K562 (cell line): ENCODE measurements at regions of chr11 and their contacts with region 1.

Region 1: GRCh38 chr11:76152086-76152681 is 54.1 kb downstream of the WNT11 start:
- DNase-seq: peak; percentile 88 to 92 (median 89)
- ATAC-seq: peak; percentile 97
- H3K4me3 ChIP-seq: peak overlapping the region; percentile 35
- H3K27ac ChIP-seq: no peak overlapping the region; the same call in 2 of the 3 replicates
- H3K4me1 ChIP-seq: peaks cover 12 to 20% of the 10 kb centered on the region in 2 experiments
- H3K27me3 ChIP-seq: peaks cover 2 to 9% of the 10 kb centered on the region in 2 experiments; a peak in 3 of 5 replicates
- CTCF ChIP-seq: peak; percentile 95 to 98 (median 95)
- EP300 ChIP-seq: no peak
- POLR2A ChIP-seq: no peak
- RAD21 ChIP-seq: peak; percentile 94 to 97

Region 2: GRCh38 chr11:75721855-75722668 is 430.1 kb before region 1 on chr11:
- CTCF ChIA-PET with region 1: no interaction called
- POLR2A ChIA-PET with region 1: no interaction called
- in situ Hi-C with region 1: no loop called
- intact Hi-C with region 1: loop called (anchors 10 kb)
- DNase-seq: no peak
- ATAC-seq: no peak
- H3K4me3 ChIP-seq: no peak overlapping the region
- H3K27ac ChIP-seq: no peak overlapping the region
- H3K4me1 ChIP-seq: peaks cover 3 to 6% of the 10 kb centered on the region in 2 experiments; a peak in 2 of 5 replicates
- H3K27me3 ChIP-seq: peaks cover 0 to 11% of the 10 kb centered on the region in 2 experiments; a peak in 2 of 5 replicates
- CTCF ChIP-seq: no peak
- EP300 ChIP-seq: no peak
- POLR2A ChIP-seq: no peak
- RAD21 ChIP-seq: no peak

Region 3: GRCh38 chr11:75802913-75803820 is 349.0 kb before region 1 on chr11:
- CTCF ChIA-PET with region 1: interaction called, 8 read pairs
- POLR2A ChIA-PET with region 1: no interaction called
- in situ Hi-C with region 1: no loop called
- intact Hi-C with region 1: loop called (anchors 1 kb)
- DNase-seq: peak; percentile 77 to 82 (median 80)
- ATAC-seq: peak; percentile 96
- H3K4me3 ChIP-seq: no peak overlapping the region
- H3K27ac ChIP-seq: no peak overlapping the region
- H3K4me1 ChIP-seq: 0 out of 5 replicates have a peak, but pooled peaks cover 0 to 3% of the 10 kb centered on the region in 2 experiments
- H3K27me3 ChIP-seq: no peaks in the 10 kb centered on the region
- CTCF ChIP-seq: peak; percentile 88 to 93 (median 88)
- EP300 ChIP-seq: no peak
- POLR2A ChIP-seq: no peak
- RAD21 ChIP-seq: peak; percentile 84 to 91

Region 4: DNA sequence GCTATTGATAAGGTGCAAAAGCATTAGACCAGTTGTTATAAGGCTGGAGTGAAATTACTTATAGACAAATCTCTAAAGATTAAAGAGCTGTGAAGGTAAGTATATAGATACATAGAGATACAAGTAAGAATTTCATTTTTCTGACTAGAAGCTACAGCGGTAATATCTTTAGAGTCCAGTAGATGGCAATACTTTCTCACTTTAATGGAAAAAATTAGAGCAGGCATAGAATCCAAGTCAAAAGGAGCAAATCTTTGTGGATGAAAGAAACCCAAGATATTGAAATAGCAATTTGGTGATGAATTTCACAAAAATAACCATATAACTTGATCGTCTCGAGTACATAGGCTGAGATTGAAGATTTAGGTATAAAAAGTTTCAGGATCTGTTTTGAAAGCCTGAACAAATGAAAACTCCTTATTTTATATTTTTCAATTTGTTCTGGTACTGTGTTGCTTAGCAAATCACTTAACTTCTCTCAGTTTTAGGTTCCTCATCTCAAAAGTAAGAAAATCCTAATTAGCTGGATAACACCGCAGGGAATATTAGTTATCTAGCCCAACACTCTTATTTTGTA is 255.3 kb before region 1 on chr11:
- CTCF ChIA-PET with region 1: interaction called, 30 read pairs
- POLR2A ChIA-PET with region 1: interaction called, 8 read pairs
- in situ Hi-C with region 1: loop called (anchors 5 kb)
- intact Hi-C with region 1: loop called (anchors 1 kb)
- DNase-seq: peak; percentile 22 to 42 (median 29)
- ATAC-seq: peak; percentile 68; the same call in 2 of the 3 replicates
- H3K4me3 ChIP-seq: no peak overlapping the region
- H3K27ac ChIP-seq: no peak overlapping the region
- H3K4me1 ChIP-seq: no peaks in the 10 kb centered on the region
- H3K27me3 ChIP-seq: no peaks in the 10 kb centered on the region
- CTCF ChIP-seq: peak; percentile 45 to 85 (median 48); a peak in 4 of 6 replicates
- EP300 ChIP-seq: no peak
- POLR2A ChIP-seq: no peak
- RAD21 ChIP-seq: peak; percentile 86 to 87

Region 5: DNA sequence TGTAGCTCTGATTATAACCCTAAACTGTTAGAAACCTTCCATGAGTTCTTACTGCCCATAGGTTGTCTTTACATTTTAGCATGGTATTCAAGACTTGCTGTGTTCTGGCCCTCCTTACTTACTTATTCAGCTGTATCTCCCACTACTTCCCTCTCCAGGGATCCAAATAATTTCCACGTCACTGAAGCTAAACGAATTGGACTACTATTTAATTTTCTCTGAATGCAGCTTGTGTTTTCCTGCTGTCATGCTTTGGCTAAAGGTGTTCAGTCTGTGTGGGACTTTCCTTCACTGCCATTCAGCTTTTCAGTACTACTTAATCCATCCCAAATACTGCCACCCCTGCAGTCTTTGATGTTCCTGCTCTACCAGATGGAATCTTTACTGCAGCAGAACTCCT is 248.9 kb before region 1 on chr11:
- CTCF ChIA-PET with region 1: interaction called, 30 read pairs
- POLR2A ChIA-PET with region 1: no interaction called
- in situ Hi-C with region 1: loop called (anchors 5 kb)
- intact Hi-C with region 1: no loop called
- DNase-seq: no peak
- ATAC-seq: no peak
- H3K4me3 ChIP-seq: no peak overlapping the region
- H3K27ac ChIP-seq: no peak overlapping the region
- H3K4me1 ChIP-seq: no peaks in the 10 kb centered on the region
- H3K27me3 ChIP-seq: no peaks in the 10 kb centered on the region
- CTCF ChIP-seq: no peak
- EP300 ChIP-seq: no peak
- POLR2A ChIP-seq: no peak
- RAD21 ChIP-seq: no peak

Region 6: DNA sequence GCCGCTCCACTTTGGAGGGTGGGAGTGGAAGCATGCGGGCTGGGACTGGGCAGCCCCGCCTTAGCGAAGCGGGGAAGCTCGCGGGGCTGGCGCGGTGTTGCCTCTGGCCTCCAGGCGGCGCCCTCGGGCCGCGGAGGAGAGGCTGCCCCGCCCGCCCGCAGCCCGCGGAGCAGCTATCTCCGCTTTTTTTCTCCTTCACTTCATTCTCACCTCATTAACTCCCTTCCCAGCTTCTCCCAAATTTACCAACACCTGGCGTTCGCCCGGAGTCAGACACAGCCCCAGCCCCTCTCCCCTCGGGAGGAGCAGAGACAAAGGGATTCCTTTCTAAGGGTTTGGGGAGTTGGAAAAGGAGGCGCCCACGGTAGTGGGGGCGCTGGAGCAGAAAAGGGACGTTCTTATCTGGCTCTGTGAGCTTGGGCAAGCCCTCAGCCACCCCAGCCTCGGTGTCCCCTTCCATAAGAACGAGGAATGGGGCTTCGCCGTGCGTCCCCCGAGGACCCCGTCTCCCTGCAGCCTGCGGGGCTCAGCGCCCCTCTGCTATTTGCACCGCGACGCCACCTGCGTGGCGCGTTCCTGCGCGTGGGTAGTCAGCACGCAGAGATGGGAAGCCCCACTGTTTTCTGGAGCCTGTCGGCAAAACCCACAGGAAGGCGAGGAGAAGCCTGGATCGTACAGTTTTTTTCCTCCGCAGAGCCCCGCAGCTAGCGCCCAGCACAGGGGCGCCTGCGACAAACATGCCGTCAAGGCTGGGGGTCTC is 55.6 kb after region 1 on chr11:
- CTCF ChIA-PET with region 1: no interaction called
- POLR2A ChIA-PET with region 1: no interaction called
- in situ Hi-C with region 1: no loop called
- intact Hi-C with region 1: loop called (anchors 5 kb)
- DNase-seq: peak; percentile 87 to 92 (median 90)
- ATAC-seq: peak; percentile 90
- H3K4me3 ChIP-seq: peak overlapping the region; percentile 46
- H3K27ac ChIP-seq: no peak overlapping the region
- H3K4me1 ChIP-seq: peaks cover 18 to 59% of the 10 kb centered on the region in 2 experiments; a peak in 4 of 5 replicates
- H3K27me3 ChIP-seq: peaks cover 0 to 29% of the 10 kb centered on the region in 2 experiments; a peak in 2 of 5 replicates
- CTCF ChIP-seq: peak; percentile 92 to 94 (median 93)
- EP300 ChIP-seq: no peak
- POLR2A ChIP-seq: no peak
- RAD21 ChIP-seq: peak; percentile 93 to 95